HEK293 (cell line): ENCODE measurements at regions of chr11 and their contacts with region 1.

Region 1: DNA sequence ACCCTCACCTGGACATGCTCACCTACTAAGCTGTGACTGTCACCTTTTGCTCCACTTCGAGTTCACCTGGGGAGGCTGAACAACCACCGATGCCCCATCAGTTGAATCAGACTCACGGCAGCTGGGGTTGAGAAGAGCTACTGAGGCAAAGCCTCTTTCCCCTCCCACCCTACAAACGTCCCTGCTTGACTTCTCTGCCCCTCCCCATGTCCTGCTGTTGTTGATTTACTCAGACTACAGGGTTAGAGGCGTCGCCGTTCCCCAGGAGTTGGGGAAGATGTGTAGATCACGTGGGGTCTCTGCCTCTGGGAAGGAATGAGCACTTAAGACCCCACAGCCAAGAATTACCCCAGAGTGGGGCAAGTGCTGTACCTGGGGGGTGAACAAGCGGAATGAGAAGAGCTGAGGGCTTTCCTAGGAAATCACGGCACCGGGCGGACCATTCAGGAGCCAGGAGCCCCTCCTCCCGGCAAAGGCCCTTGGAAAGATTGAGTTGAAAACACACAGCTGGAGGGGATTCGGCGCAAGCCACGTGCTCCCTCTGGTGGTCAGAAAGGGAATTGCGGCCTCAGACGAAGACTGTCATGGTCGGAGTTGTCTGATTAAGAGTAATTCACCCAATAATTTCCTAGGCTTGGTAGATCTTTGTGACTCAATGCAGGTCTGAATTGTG is 7.0 kb downstream of the FXYD2 start:
- H3K4me3 ChIP-seq: no peak overlapping the region
- H3K27ac ChIP-seq: no peak overlapping the region
- H3K4me1 ChIP-seq: peaks cover 3% of the 10 kb centered on the region; the same call in 1 of the 2 replicates
- CTCF ChIP-seq: peak; percentile 83

Region 2: GRCh38 chr11:117678658-117679406 is 138.7 kb before region 1 on chr11:
- CTCF ChIA-PET with region 1: no interaction called
- POLR2A ChIA-PET with region 1: no interaction called
- H3K4me3 ChIP-seq: no peak overlapping the region
- H3K27ac ChIP-seq: no peak overlapping the region
- H3K4me1 ChIP-seq: no peaks in the 10 kb centered on the region
- CTCF ChIP-seq: no peak

Region 3: DNA sequence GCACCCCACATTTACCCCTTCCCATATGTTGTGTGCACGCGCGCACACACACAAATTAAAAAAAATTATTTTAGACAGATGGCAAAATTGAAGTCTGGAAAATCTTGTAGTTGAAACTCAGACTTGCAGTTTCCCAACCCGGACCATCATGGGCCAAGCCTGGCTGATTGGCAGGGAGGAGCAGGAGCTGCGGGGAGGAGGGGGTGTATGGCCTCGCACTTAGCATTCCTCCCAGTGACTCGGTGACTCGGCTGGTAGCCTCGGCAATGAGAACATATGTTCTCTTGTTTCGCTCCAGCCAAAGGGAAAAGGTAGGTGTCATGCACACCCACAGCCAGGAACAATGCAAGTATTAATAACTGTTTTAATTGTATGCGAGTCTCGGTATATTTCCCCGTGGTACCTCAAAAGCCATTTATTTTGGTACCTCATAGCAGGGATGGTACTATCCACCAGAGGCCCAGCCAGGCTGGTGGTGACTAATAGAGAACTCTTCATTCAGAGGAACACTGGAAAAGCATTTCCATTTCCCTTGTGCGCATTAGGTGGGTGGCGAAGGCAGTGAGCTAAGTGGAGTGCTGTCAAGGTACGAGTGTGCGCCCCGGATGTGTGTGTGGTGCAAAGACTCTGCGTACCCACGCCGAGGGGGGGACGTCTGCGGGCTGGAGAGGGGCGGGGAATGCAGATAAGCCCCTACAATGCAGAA is 113.0 kb before region 1 on chr11:
- CTCF ChIA-PET with region 1: no interaction called
- POLR2A ChIA-PET with region 1: no interaction called
- H3K4me3 ChIP-seq: no peak overlapping the region
- H3K27ac ChIP-seq: no peak overlapping the region
- H3K4me1 ChIP-seq: no peaks in the 10 kb centered on the region
- CTCF ChIP-seq: no peak

Region 4: GRCh38 chr11:117796872-117797529 is 20.5 kb before region 1 on chr11 and contains the start of gene DSCAML1:
- CTCF ChIA-PET with region 1: interaction called, 15 read pairs
- POLR2A ChIA-PET with region 1: no interaction called
- H3K4me3 ChIP-seq: peak within 1 kb of the TSS; percentile 28
- H3K27ac ChIP-seq: no peak within 1 kb of the TSS
- H3K4me1 ChIP-seq: no peaks in the 10 kb centered on the region
- CTCF ChIP-seq: no peak

Region 5: GRCh38 chr11:117843666-117844484 is 26.4 kb after region 1 on chr11:
- CTCF ChIA-PET with region 1: interaction called, 16 read pairs
- POLR2A ChIA-PET with region 1: no interaction called
- H3K4me3 ChIP-seq: no peak overlapping the region
- H3K27ac ChIP-seq: no peak overlapping the region
- H3K4me1 ChIP-seq: no peaks in the 10 kb centered on the region
- CTCF ChIP-seq: peak; percentile 64

Region 6: DNA sequence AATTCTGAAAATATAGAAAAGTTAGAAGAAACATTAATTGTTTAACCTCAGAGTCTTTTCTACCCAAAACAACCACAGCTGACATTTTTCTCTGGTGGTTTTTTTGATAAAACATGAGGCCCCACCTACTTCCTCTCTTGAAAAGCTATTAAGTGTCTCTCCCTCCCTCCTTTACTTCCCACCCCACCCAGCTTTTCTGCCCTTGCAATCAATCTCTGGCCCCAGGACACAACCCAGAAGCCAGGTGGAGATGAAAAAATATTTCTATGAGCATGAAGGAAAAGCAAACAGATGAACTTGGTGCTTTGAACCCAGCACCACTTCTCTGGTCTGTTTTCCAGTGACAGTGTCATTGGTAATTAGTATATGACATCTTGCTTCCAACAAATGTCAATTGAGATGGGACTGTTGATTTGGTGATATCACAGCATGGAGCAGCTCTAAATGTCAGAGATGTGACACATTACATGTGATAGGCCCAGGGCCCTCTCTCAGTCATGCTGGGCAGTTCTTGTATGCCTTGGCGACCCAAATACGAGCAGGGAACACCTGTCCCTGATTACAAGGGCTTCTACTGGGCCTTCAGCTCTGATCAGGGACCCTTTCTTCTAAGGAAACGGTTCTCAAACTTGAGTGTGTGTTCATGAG is 135.6 kb after region 1 on chr11:
- CTCF ChIA-PET with region 1: interaction called, 223 read pairs
- POLR2A ChIA-PET with region 1: no interaction called
- H3K4me3 ChIP-seq: no peak overlapping the region
- H3K27ac ChIP-seq: no peak overlapping the region
- H3K4me1 ChIP-seq: no peaks in the 10 kb centered on the region
- CTCF ChIP-seq: no peak